ENCODE measurements at regions of chr2 and their contacts with region 1.

Region 1: GRCh38 chr2:99154643-99155536 is at the starts of genes LIPT1 and TSGA10:
- DNase-seq: peak; percentile 93 to 95 (median 94)
- ATAC-seq: peak; percentile 98 to 99 (median 99)
- H3K4me3 ChIP-seq: peak within 1 kb of the TSS; percentile 51 to 84 (median 72)
- H3K27ac ChIP-seq: peak within 1 kb of the TSS; percentile 45 to 93 (median 90)
- H3K4me1 ChIP-seq: peaks cover 0 to 27% (median 16%) of the 10 kb centered on the region in 12 donors
- H3K27me3 ChIP-seq: no peaks in the 10 kb centered on the region
- CTCF ChIP-seq: peak in 4 of 12 donors; percentile 10 to 19 (median 15)
- POLR2A ChIP-seq: peak; percentile 21 to 83
- total RNA-seq, gene LIPT1: 5.3 to 10.9 (median 7.5) TPM
- total RNA-seq, gene TSGA10: 1.3 to 63.7 (median 2.9) TPM

Region 2: GRCh38 chr2:99141110-99142108 is 13.5 kb before region 1 on chr2 and contains the start of gene C2orf15:
- intact Hi-C with region 1: loop called in 1 of 10 experiments (anchors 2 kb)
- DNase-seq: peak; percentile 90 to 96 (median 93)
- ATAC-seq: peak; percentile 96 to 99 (median 98)
- H3K4me3 ChIP-seq: peak within 1 kb of the TSS; percentile 62 to 99 (median 91)
- H3K27ac ChIP-seq: peak within 1 kb of the TSS in 11 of 12 donors; percentile 43 to 88 (median 75)
- H3K4me1 ChIP-seq: peaks cover 0 to 15% (median 4%) of the 10 kb centered on the region in 12 donors
- H3K27me3 ChIP-seq: no peaks in the 10 kb centered on the region
- CTCF ChIP-seq: no peak
- POLR2A ChIP-seq: peak in 1 of 2 donors; percentile 97
- total RNA-seq, gene C2orf15: 0.29 to 0.70 (median 0.69) TPM in 3 of 9 donors, not detected in the others

Region 3: GRCh38 chr2:99180755-99181623 is 26.1 kb after region 1 on chr2 and contains the starts of genes MITD1 and MRPL30:
- intact Hi-C with region 1: loop called in 1 of 10 experiments (anchors 1 kb)
- DNase-seq: peak; percentile 92 to 94 (median 93)
- ATAC-seq: peak; percentile 98 to 99 (median 98)
- H3K4me3 ChIP-seq: peak within 1 kb of the TSS; percentile 66 to 92 (median 80)
- H3K27ac ChIP-seq: peak within 1 kb of the TSS in 11 of 12 donors; percentile 57 to 92 (median 78)
- H3K4me1 ChIP-seq: peaks cover 4 to 56% (median 28%) of the 10 kb centered on the region in 12 donors
- H3K27me3 ChIP-seq: no peaks in the 10 kb centered on the region
- CTCF ChIP-seq: no peak
- POLR2A ChIP-seq: peak in 1 of 2 donors; percentile 77
- total RNA-seq, gene MITD1: 8.4 to 16.4 (median 14.0) TPM
- total RNA-seq, gene MRPL30: 26.4 to 38.3 (median 34.3) TPM